ENCODE measurements at regions of chrX and their contacts with region 1.

Region 1: DNA sequence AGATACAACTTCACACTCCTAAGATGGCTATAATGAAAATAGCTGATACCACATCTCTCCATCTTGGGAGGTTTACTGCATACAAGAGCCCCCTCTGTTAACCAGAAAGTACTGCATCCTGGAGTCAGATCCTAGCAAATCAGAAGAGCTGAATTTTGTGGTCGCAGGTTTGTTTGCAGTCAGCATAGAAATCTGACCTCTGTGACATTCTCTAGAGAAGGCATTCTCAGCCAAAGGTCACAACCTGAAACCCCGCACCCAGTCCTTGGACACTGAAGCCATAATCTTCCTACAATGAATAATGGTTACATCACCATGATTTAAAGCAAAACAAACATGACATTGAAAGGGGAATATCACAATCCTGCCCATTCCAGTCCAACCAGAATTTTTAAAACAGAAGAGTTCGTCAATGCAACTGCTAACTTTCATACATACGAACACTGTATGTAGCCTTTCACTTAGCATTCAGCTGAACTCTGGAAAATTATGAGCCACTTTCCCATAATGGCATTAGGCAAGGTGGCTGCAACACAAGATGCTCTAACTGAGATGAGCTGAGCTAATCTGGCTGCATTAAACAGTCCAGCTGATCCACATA is 17.6 kb downstream of the HS6ST2 start:
- DNase-seq: peak; percentile 76 to 82
- H3K4me3 ChIP-seq: no peak overlapping the region
- H3K4me3 Mint-ChIP-seq: peak overlapping the region; percentile 24
- H3K27ac Mint-ChIP-seq: no peak overlapping the region
- H3K4me1 ChIP-seq: peaks cover 18% of the 10 kb centered on the region
- H3K4me1 Mint-ChIP-seq: peaks cover 6% of the 10 kb centered on the region
- H3K27me3 ChIP-seq: no peaks in the 10 kb centered on the region
- H3K27me3 Mint-ChIP-seq: no peaks in the 10 kb centered on the region
- CTCF ChIP-seq: peak; percentile 24 to 30

Region 2: GRCh38 chrX:132740316-132741123 is 200.3 kb before region 1 on chrX:
- CTCF ChIA-PET with region 1: no interaction called
- POLR2A ChIA-PET with region 1: no interaction called
- intact Hi-C with region 1: loop called (anchors 2 kb)
- DNase-seq: peak in 1 of 2 experiments; percentile 8
- H3K4me3 ChIP-seq: no peak overlapping the region
- H3K4me3 Mint-ChIP-seq: no peak overlapping the region
- H3K27ac Mint-ChIP-seq: no peak overlapping the region
- H3K4me1 ChIP-seq: no peaks in the 10 kb centered on the region
- H3K4me1 Mint-ChIP-seq: peaks cover 6% of the 10 kb centered on the region
- H3K27me3 ChIP-seq: no peaks in the 10 kb centered on the region
- H3K27me3 Mint-ChIP-seq: no peaks in the 10 kb centered on the region
- CTCF ChIP-seq: peak; percentile 61 to 66

Region 3: DNA sequence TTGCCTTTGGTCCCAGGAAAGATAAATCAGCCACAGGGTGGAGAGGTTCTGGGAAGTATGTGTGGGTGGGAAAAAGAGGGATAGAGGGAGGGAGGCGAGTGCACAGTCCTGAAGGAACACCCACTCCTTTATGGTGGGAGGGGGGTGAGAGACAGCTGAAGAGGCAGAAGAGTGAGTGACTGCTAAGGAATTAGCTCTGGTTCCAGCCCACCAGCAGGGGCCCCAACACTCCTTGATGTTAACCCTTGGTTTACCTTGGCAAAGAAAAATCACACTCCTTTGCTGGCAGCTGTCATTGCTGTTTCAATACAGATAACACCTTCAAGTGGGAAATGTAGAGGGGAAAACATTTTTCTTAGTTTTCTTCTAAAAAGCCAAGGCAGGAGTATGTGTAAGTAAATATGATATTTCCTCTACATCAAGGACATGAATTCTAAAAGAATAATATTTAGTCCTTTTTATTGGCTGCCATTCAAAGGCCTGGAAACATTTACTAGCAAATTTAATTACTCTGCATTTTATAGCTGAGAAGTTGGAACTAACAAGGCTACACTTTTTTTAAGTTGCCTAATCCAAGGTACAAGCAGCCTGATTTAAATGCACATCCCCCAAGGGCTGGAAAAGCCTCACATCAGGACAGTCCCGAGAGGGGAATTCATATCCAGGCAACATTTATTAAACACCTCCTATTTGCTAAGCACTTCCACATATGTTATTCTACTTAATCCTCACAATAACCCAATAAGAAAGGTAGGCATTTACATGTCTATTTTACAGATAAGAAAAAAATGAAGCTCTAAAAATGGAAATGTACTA is 64.1 kb before region 1 on chrX:
- CTCF ChIA-PET with region 1: no interaction called
- POLR2A ChIA-PET with region 1: no interaction called
- intact Hi-C with region 1: loop called (anchors 2 kb)
- DNase-seq: peak; percentile 42 to 57
- H3K4me3 ChIP-seq: no peak overlapping the region
- H3K4me3 Mint-ChIP-seq: peak overlapping the region; percentile 38
- H3K27ac Mint-ChIP-seq: peak overlapping the region; percentile 78
- H3K4me1 ChIP-seq: peaks cover 44% of the 10 kb centered on the region
- H3K4me1 Mint-ChIP-seq: peaks cover 27% of the 10 kb centered on the region
- H3K27me3 ChIP-seq: no peaks in the 10 kb centered on the region
- H3K27me3 Mint-ChIP-seq: no peaks in the 10 kb centered on the region
- CTCF ChIP-seq: peak in 1 of 2 experiments; percentile 9

Region 4: DNA sequence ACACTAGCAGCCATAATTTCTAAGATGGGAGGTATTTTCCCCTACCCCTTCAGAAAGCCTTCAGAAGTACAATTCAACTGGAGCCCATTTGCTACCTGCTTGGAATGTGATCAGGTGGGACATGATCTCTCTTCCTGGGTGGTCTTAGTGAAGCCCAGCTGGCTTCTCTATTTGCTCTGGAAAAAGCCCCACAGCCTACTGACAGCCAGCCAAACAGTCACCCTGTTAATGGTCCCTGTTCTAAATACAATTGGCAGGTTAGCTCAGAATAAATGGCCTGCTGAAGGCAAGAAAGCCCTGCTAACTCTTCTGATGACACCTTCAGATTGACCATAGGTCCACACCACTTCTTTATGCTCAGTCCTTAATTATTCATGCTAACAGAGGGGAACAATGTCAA is 22.3 kb before region 1 on chrX:
- CTCF ChIA-PET with region 1: no interaction called
- POLR2A ChIA-PET with region 1: no interaction called
- intact Hi-C with region 1: loop called (anchors 2 kb)
- DNase-seq: no peak
- H3K4me3 ChIP-seq: no peak overlapping the region
- H3K4me3 Mint-ChIP-seq: no peak overlapping the region
- H3K27ac Mint-ChIP-seq: no peak overlapping the region
- H3K4me1 ChIP-seq: no peaks in the 10 kb centered on the region
- H3K4me1 Mint-ChIP-seq: peaks cover 6% of the 10 kb centered on the region
- H3K27me3 ChIP-seq: no peaks in the 10 kb centered on the region
- H3K27me3 Mint-ChIP-seq: no peaks in the 10 kb centered on the region
- CTCF ChIP-seq: no peak

Region 5: GRCh38 chrX:132957211-132958090 is 16.6 kb after region 1 on chrX:
- CTCF ChIA-PET with region 1: no interaction called
- POLR2A ChIA-PET with region 1: no interaction called
- intact Hi-C with region 1: loop called (anchors 2 kb)
- DNase-seq: peak; percentile 42 to 62
- H3K4me3 ChIP-seq: peak overlapping the region; percentile 74
- H3K4me3 Mint-ChIP-seq: peak overlapping the region; percentile 86
- H3K27ac Mint-ChIP-seq: peak overlapping the region; percentile 94
- H3K4me1 ChIP-seq: peaks cover 25% of the 10 kb centered on the region
- H3K4me1 Mint-ChIP-seq: peaks cover 26% of the 10 kb centered on the region
- H3K27me3 ChIP-seq: no peaks in the 10 kb centered on the region
- H3K27me3 Mint-ChIP-seq: no peaks in the 10 kb centered on the region
- CTCF ChIP-seq: no peak